ENCODE measurements at regions of chr6 and their contacts with region 1.

Region 1: DNA sequence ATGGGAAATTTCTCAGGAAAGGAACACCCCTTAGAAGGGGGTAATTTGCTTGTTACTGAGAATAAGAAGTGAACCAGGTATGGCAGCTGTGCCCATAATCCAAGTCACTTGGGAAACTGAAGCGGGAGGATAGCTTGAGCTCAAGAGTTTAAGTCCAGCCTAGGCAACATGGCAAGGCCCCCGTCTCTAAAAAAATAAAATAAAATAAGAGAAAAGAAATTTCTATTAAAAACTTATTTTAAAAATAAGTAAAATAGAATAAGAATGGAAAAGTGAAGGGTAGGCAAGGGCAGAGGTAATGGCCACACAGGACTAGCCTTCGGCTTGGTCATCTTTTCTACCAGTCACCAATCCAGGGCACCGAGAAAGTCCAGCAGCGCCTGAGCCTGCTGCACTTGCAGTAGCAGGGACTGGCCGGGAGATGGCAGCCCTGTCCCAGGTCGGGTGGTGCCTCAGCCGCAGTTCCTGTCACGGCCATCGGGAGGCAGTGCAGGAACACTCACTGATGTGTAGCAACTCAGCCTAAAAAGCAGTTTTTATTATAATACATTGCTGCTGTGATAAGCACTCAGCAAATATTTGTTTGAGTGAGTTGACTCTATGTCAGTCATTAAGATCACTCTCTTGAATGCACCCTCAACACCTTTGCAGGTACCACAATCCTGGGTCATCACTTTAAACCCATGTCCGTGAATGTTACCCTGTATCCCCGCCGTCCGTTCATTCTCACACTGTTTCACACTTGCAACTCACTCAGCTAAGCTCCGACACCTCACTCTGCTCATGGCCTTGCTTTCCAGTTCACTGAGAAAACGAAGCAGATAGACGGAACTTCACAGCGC is 23.2 kb upstream of the GCM1 start:
- DNase-seq: peak; percentile 91
- ATAC-seq: peak; percentile 90
- H3K4me3 Mint-ChIP-seq: no peak overlapping the region
- H3K27ac Mint-ChIP-seq: no peak overlapping the region
- H3K4me1 Mint-ChIP-seq: no peaks in the 10 kb centered on the region
- H3K27me3 Mint-ChIP-seq: peaks cover 3% of the 10 kb centered on the region

Region 2: GRCh38 chr6:53042112-53042511 is 129.7 kb before region 1 on chr6:
- CTCF ChIA-PET with region 1: no interaction called
- POLR2A ChIA-PET with region 1: no interaction called
- DNase-seq: no peak
- ATAC-seq: no peak
- H3K4me3 Mint-ChIP-seq: no peak overlapping the region
- H3K27ac Mint-ChIP-seq: no peak overlapping the region
- H3K4me1 Mint-ChIP-seq: no peaks in the 10 kb centered on the region
- H3K27me3 Mint-ChIP-seq: no peaks in the 10 kb centered on the region

Region 3: DNA sequence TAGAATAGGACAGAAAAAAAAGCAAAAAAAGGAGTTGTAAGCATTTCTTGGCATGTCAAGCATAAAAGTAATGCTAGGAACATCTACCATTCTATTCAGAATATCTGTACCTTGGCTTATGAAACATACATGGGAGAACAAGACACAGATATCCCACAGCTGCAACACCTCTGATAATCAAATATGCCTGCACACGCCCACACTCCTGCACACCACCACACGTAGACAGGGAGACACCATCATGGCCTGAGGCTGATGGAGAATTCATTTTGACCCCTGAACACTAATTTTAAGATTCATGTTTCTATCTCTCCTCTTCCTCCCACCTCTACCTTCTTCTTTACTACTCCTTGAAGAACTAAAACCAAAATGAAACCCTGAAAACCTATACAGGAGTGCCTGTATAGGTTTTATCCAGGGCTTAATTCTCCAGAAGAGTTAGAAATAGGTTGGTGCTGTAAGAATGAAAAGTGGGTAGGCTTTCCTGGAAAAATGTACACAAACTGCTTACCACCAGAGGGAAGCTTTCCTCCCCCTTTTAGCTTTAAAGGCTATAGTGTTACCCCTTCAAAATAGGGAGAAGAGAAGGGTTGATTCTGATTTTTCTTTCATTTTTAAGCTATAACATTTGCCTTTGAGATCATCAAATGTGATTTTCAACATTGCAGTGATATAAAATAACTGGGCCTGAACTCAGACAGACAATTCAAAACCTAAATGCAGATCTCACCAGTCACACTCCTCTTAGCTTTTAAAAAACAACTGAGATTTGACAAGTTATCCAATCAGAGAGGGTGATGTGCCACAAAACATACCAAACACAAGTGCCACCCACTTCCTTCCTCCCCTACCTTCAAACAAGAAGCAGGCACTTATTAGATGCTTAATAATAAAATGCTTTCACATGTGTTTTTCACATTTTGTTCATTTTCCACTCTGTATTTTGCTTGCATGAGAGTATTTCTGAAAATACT is 119.0 kb after region 1 on chr6:
- CTCF ChIA-PET with region 1: interaction called, 13 read pairs
- POLR2A ChIA-PET with region 1: no interaction called
- DNase-seq: no peak
- ATAC-seq: peak; percentile 56
- H3K4me3 Mint-ChIP-seq: no peak overlapping the region
- H3K27ac Mint-ChIP-seq: peak overlapping the region; percentile 36
- H3K4me1 Mint-ChIP-seq: peaks cover 36% of the 10 kb centered on the region
- H3K27me3 Mint-ChIP-seq: no peaks in the 10 kb centered on the region

Region 4: DNA sequence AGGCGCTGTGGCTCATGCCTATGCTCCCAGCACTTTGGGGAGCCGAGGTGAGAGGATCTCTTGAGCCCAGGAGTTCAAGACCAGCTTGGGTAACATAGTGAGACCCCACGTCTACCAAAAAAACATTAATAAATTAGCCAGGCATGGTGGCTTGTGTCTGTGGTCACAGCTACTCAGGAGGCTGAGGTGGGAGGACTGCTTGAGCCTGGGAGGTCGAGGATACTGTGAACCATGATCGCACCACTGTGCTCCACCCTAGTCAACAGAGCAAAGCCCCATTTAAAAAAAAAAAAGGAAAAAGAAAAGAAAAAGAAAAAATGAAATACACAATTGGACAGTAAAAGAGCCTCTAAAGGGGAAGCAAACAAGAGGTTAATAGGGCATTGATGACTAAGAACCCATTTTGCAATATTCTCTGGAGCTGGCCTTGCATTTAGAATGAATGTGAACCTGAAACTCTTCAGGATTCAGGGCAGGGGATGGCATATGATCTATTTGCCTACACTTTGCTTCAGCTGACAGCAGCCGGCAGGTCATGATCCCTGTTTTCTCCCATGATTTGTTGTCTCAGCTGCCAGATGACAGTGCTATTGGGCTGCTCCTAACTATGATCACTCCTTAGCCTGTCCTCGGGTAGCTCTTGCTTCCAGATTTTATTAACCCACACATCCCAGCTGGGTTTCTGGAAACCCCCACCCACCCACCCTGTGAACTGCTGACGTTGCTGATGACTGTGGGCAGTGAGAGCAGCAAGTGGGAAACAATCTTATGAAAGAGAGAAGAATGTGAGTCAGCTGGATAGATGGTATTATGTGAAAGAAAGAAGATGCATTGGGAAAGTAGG is 260.7 kb after region 1 on chr6:
- CTCF ChIA-PET with region 1: interaction called, 15 read pairs
- POLR2A ChIA-PET with region 1: no interaction called
- DNase-seq: no peak
- ATAC-seq: no peak
- H3K4me3 Mint-ChIP-seq: no peak overlapping the region
- H3K27ac Mint-ChIP-seq: no peak overlapping the region
- H3K4me1 Mint-ChIP-seq: peaks cover 6% of the 10 kb centered on the region
- H3K27me3 Mint-ChIP-seq: peaks cover 3% of the 10 kb centered on the region

Region 5: DNA sequence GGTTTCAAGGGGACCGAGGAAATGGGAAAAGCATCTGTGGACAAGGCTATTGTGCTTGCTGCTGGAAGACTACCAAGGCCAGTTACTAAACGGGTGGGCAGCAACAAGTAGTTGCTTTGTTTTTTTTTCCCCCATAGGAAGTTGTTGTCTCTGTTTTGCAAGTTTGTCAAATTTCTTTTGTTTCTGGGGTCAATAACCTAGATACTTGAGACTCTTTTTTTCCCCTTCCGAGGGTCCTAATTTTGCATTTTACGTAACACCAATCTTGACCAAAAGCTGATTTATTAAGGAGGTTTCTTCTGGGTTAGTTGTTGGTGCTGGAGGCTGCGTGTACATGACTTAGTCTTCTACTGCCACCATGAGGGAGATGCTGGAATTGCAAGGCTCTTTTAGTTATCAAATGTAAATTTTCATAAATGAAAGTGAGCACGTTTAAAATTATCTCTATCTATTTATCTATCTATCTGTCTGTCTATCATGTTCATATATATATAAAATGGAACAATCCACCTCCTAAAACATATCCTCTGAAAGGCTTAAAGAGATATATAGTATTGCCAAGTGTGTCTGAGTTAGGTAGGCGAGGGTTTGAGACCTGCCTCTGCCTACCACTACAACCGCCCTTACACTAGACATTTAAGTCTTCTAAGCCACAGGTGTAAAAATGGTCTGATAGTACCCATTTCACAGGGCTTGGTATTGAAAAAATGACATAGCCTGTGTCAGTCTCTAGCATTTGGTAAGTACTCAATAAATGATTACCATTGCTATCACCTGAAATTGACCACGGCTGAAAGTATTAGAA is 312.9 kb after region 1 on chr6:
- CTCF ChIA-PET with region 1: interaction called, 84 read pairs
- POLR2A ChIA-PET with region 1: no interaction called
- DNase-seq: peak; percentile 82
- ATAC-seq: peak; percentile 51
- H3K4me3 Mint-ChIP-seq: no peak overlapping the region
- H3K27ac Mint-ChIP-seq: no peak overlapping the region
- H3K4me1 Mint-ChIP-seq: peaks cover 17% of the 10 kb centered on the region
- H3K27me3 Mint-ChIP-seq: peaks cover 21% of the 10 kb centered on the region

Measured in activated CD8-positive, alpha-beta T cell treated with anti-CD3 and anti-CD28 coated beads, Interleukin-2, amount 10 ng/mL, durations not matched to agents 7 days and 5 days (primary cell).